HAP-1 (cell line): ENCODE measurements at regions of chr3 and their contacts with region 1.

Region 1: GRCh38 chr3:53072653-53073552 is 27.0 kb upstream of the SFMBT1 start:
- DNase-seq: peak; percentile 88 to 93
- H3K4me3 ChIP-seq: no peak overlapping the region
- H3K4me1 ChIP-seq: peaks cover 2% of the 10 kb centered on the region
- H3K27me3 ChIP-seq: no peaks in the 10 kb centered on the region

Region 2: GRCh38 chr3:52614689-52615088 is 458.2 kb before region 1 on chr3:
- in situ Hi-C with region 1: no loop called
- DNase-seq: no peak
- H3K4me3 ChIP-seq: no peak overlapping the region
- H3K4me1 ChIP-seq: no peaks in the 10 kb centered on the region
- H3K27me3 ChIP-seq: no peaks in the 10 kb centered on the region

Region 3: GRCh38 chr3:52851348-52851747 is 221.6 kb before region 1 on chr3:
- in situ Hi-C with region 1: loop called (anchors 5 kb)
- DNase-seq: peak; percentile 76 to 77
- H3K4me3 ChIP-seq: no peak overlapping the region
- H3K4me1 ChIP-seq: peaks cover 18% of the 10 kb centered on the region
- H3K27me3 ChIP-seq: no peaks in the 10 kb centered on the region